Transverse colon (tissue), 4 donors: ENCODE measurements at regions of chrX and their contacts with region 1.

Region 1: GRCh38 chrX:74104356-74105015 is 199.5 kb upstream of the ZCCHC13 start:
- DNase-seq: no peak
- H3K4me3 ChIP-seq: no peak overlapping the region
- H3K27ac ChIP-seq: no peak overlapping the region
- H3K4me1 ChIP-seq: no peaks in the 10 kb centered on the region
- H3K27me3 ChIP-seq: no peaks in the 10 kb centered on the region
- CTCF ChIP-seq: no peak
- EP300 ChIP-seq: no peak
- POLR2A ChIP-seq: no peak

Region 2: DNA sequence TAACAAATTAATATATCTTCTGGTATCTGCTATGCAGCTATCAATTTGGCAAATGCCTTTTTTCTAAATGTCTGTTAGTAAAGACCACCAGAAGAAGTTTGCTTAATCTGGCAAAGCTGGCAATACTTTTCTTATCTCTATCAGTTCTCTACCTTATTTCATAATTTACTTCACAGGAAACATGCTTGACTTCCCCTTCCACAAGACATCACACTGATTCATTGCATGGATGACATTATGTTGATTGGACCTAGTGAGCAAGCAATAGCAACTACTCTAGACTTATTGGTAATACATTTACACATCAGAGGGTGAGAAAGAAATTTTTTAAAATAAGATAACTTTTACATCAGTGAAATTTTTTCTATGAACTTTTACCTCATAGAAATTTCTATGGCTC is 575.9 kb after region 1 on chrX:
- in situ Hi-C with region 1: no loop called
- intact Hi-C with region 1: loop called (anchors 5 kb)
- DNase-seq: no peak
- H3K4me3 ChIP-seq: no peak overlapping the region
- H3K27ac ChIP-seq: no peak overlapping the region
- H3K4me1 ChIP-seq: no peaks in the 10 kb centered on the region
- H3K27me3 ChIP-seq: no peaks in the 10 kb centered on the region
- CTCF ChIP-seq: no peak
- EP300 ChIP-seq: no peak
- POLR2A ChIP-seq: no peak